HEK293 (cell line): ENCODE measurements at regions of chr5 and their contacts with region 1.

Region 1: GRCh38 chr5:137743031-137743640 is 7.2 kb upstream of the KLHL3 start:
- H3K4me3 ChIP-seq: no peak overlapping the region
- H3K27ac ChIP-seq: no peak overlapping the region
- H3K4me1 ChIP-seq: no peaks in the 10 kb centered on the region
- CTCF ChIP-seq: peak; percentile 45; the same call in 1 of the 2 replicates

Region 2: DNA sequence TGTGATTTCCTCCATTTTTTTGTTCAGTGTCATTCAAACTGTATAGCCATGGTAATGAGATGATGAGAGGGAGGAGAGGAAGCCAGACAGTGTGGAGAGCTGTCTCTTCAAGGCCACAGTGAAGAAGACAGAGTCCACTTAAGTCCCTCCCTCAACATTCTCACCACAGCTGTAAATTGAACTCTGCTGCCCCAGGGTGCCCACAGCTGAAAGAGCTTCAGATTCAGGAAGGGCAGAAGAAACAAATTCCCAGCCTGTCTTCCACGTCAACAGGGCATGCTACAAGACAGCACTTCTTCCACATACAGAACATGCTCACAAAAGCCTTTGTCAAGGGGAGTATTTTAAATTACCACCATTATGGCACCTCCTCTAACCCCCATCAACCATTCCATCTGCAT is 107.6 kb before region 1 on chr5:
- CTCF ChIA-PET with region 1: interaction called, 87 read pairs
- POLR2A ChIA-PET with region 1: no interaction called
- H3K4me3 ChIP-seq: no peak overlapping the region
- H3K27ac ChIP-seq: no peak overlapping the region
- H3K4me1 ChIP-seq: no peaks in the 10 kb centered on the region
- CTCF ChIP-seq: no peak

Region 3: DNA sequence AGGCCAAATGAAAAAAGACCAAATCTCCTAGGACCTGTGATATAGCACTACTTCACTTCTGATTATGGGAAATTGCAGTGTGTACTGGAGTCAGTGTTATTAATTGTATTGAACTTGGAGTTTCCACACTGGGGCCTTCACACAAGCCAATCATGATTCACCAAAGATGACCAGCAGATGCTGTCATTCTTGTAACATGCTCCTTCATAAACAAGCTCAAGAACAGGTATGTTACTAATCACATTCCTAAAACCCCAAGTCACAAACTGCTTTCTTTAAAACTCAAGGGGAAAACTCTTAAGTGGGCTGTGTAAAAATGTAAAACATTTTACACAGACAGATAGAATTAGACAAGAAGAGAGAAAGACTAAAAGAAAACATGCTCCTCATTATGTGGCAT is 12.8 kb before region 1 on chr5:
- CTCF ChIA-PET with region 1: interaction called, 17 read pairs
- POLR2A ChIA-PET with region 1: no interaction called
- H3K4me3 ChIP-seq: no peak overlapping the region
- H3K27ac ChIP-seq: no peak overlapping the region
- H3K4me1 ChIP-seq: no peaks in the 10 kb centered on the region
- CTCF ChIP-seq: no peak

Region 4: GRCh38 chr5:137754126-137754960 is 11.2 kb after region 1 on chr5 and contains the start of gene HNRNPA0:
- CTCF ChIA-PET with region 1: interaction called, 24 read pairs
- POLR2A ChIA-PET with region 1: interaction called, 10 read pairs
- H3K4me3 ChIP-seq: peak within 1 kb of the TSS; percentile 72
- H3K27ac ChIP-seq: peak within 1 kb of the TSS; percentile 99
- H3K4me1 ChIP-seq: no peaks in the 10 kb centered on the region
- CTCF ChIP-seq: peak; percentile 86